Mucosa of descending colon (tissue), 3 donors: ENCODE measurements at regions of chr15 and their contacts with region 1.

Region 1: GRCh38 chr15:100349696-100350433 is 8.1 kb upstream of the ADAMTS17 start:
- DNase-seq: peak; percentile 93 to 98 (median 97)
- ATAC-seq: peak; percentile 99
- H3K4me3 ChIP-seq: peak overlapping the region; percentile 63
- H3K4me1 ChIP-seq: peaks cover 13% of the 10 kb centered on the region
- CTCF ChIP-seq: peak; percentile 96

Region 2: DNA sequence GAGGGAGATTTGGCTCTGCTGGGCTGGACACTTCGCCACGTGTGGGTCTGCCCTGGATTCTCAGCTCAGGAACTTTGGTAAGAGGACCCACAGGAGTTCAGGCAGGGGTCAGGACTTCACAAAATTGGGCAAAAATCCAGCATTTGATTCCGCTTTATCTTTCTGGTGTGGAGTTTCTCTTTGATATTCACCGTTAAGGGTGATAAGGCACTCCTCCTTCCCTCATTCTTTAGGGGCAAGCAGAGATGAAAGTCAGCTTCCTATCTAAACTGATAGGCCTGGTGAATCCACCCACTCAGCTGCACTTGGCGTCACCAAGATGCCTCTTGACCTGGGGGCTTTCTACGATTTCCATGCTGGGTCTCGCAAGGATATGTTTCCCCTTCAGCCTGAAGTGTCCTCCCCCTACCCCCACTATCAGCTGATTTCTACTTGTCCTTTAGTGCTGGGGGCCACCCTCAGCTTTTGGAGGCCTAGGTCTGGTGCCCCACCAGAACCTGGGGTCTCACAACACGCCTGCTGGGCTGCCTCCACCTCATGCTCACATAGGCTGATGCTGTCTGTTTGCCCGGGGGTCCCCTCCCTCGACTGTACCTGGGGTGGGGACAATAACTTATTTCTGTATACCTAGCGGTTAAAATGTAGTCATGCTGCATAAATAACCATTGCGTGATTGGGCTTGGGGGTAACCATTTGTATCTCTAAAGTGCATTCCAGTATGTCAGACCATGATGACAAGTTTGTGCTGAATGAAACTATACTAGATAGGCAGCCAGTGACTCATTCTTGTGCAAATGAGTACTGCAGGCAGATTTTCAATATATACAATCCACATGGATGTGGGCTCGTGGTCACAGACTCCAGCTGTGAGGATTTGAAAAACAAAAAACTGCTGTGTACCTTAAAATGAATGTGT is 256.4 kb before region 1 on chr15:
- intact Hi-C with region 1: no loop called
- DNase-seq: no peak
- ATAC-seq: no peak
- H3K4me3 ChIP-seq: no peak overlapping the region
- H3K4me1 ChIP-seq: no peaks in the 10 kb centered on the region
- CTCF ChIP-seq: no peak

Region 3: GRCh38 chr15:100308213-100308600 is 41.7 kb before region 1 on chr15:
- intact Hi-C with region 1: no loop called
- DNase-seq: no peak
- ATAC-seq: no peak
- H3K4me3 ChIP-seq: no peak overlapping the region
- H3K4me1 ChIP-seq: no peaks in the 10 kb centered on the region
- CTCF ChIP-seq: no peak

Region 4: GRCh38 chr15:100565591-100565990 is 215.7 kb after region 1 on chr15:
- intact Hi-C with region 1: loop called (anchors 10 kb)
- DNase-seq: no peak
- ATAC-seq: no peak
- H3K4me3 ChIP-seq: no peak overlapping the region
- H3K4me1 ChIP-seq: no peaks in the 10 kb centered on the region
- CTCF ChIP-seq: no peak